K562 (cell line): ENCODE measurements at regions of chr7 and their contacts with region 1.

Region 1: DNA sequence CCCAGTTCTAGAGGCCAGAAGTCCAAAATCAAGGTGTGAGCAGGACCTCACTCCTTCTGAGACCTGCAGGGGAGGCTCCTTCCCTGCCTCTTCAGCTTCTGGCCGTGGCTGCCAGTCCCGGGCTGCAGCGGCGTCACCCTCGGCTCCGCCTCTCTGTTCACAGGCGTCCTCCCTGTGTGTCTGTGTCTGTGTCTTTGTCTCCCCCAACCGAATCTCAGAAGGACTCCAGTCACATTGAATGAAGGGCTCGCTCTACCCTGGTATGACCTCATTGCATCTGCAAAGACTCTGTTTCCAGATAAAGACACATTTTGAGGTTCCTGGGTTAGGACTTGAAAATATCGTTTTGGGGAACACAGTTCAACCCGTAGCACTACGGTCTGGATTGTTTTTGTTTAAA is 33.1 kb upstream of the GALNT11 start:
- DNase-seq: peak; percentile 29 to 71 (median 55)
- ATAC-seq: peak; percentile 97
- H3K4me3 ChIP-seq: no peak overlapping the region
- H3K27ac ChIP-seq: no peak overlapping the region
- H3K4me1 ChIP-seq: no peaks in the 10 kb centered on the region
- H3K27me3 ChIP-seq: peaks cover 49 to 60% of the 10 kb centered on the region in 2 experiments
- CTCF ChIP-seq: peak; percentile 64 to 72 (median 68)
- EP300 ChIP-seq: no peak
- POLR2A ChIP-seq: no peak
- RAD21 ChIP-seq: peak; percentile 31 to 65; a peak in 3 of 4 replicates

Region 2: DNA sequence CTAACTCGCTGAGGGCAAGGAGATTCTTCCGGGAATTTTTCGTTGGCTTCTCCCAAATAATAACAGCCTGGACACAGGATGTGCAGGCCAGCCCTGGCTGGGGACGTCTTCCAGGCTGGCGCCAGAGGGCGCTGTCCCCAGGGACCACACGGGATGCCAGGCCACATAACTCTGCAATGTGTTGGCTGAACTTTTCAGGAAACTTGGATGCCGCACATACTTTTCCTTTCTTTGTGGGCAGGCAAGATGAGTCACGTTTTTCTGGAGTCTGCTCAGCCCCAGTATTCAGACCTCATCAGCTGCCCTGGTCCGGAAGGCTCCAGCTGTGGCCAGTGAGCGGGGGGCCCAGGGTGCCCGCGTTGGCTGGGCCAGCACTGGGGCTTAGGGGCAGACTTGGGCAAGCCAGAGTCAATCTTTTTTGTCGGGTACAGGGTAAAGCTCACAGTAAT is 238.2 kb before region 1 on chr7:
- CTCF ChIA-PET with region 1: no interaction called
- POLR2A ChIA-PET with region 1: interaction called, 3 read pairs
- in situ Hi-C with region 1: no loop called
- intact Hi-C with region 1: loop called (anchors 1 kb)
- DNase-seq: peak; percentile 73 to 78 (median 76)
- ATAC-seq: peak; percentile 97
- H3K4me3 ChIP-seq: no peak overlapping the region
- H3K27ac ChIP-seq: no peak overlapping the region
- H3K4me1 ChIP-seq: peaks cover 0 to 12% of the 10 kb centered on the region in 2 experiments; a peak in 3 of 5 replicates
- H3K27me3 ChIP-seq: peaks cover 30 to 57% of the 10 kb centered on the region in 2 experiments; a peak in 4 of 5 replicates
- CTCF ChIP-seq: peak; percentile 90 to 99 (median 91)
- EP300 ChIP-seq: no peak
- POLR2A ChIP-seq: no peak
- RAD21 ChIP-seq: peak; percentile 27 to 69; a peak in 3 of 4 replicates

Region 3: GRCh38 chr7:152025077-152025936 is 32.9 kb after region 1 on chr7 and contains the start of gene GALNT11:
- CTCF ChIA-PET with region 1: no interaction called
- POLR2A ChIA-PET with region 1: no interaction called
- in situ Hi-C with region 1: no loop called
- intact Hi-C with region 1: loop called (anchors 5 kb)
- DNase-seq: peak; percentile 97 to 99 (median 98)
- ATAC-seq: peak; percentile 99
- H3K4me3 ChIP-seq: peak within 1 kb of the TSS; percentile 71
- H3K27ac ChIP-seq: peak within 1 kb of the TSS; percentile 86
- H3K4me1 ChIP-seq: peaks cover 3 to 15% of the 10 kb centered on the region in 2 experiments; a peak in 3 of 5 replicates
- H3K27me3 ChIP-seq: peaks cover 4 to 13% of the 10 kb centered on the region in 2 experiments; a peak in 4 of 5 replicates
- CTCF ChIP-seq: peak; percentile 17 to 78 (median 52); a peak in 4 of 6 replicates
- EP300 ChIP-seq: no peak; the same call in 1 of the 2 replicates
- POLR2A ChIP-seq: peak; percentile 92
- RAD21 ChIP-seq: no peak
- polyA plus RNA-seq, gene GALNT11: 8.2 to 11.1 TPM

Region 4: GRCh38 chr7:152476551-152476950 is 484.2 kb after region 1 on chr7:
- CTCF ChIA-PET with region 1: no interaction called
- POLR2A ChIA-PET with region 1: no interaction called
- in situ Hi-C with region 1: no loop called
- intact Hi-C with region 1: no loop called
- DNase-seq: no peak
- ATAC-seq: peak; percentile 20
- H3K4me3 ChIP-seq: no peak overlapping the region
- H3K27ac ChIP-seq: no peak overlapping the region
- H3K4me1 ChIP-seq: no peaks in the 10 kb centered on the region
- H3K27me3 ChIP-seq: no peaks in the 10 kb centered on the region
- CTCF ChIP-seq: no peak
- EP300 ChIP-seq: no peak
- POLR2A ChIP-seq: no peak
- RAD21 ChIP-seq: no peak